PC-3 (cell line): ENCODE measurements at regions of chr2 and their contacts with region 1.

Region 1: DNA sequence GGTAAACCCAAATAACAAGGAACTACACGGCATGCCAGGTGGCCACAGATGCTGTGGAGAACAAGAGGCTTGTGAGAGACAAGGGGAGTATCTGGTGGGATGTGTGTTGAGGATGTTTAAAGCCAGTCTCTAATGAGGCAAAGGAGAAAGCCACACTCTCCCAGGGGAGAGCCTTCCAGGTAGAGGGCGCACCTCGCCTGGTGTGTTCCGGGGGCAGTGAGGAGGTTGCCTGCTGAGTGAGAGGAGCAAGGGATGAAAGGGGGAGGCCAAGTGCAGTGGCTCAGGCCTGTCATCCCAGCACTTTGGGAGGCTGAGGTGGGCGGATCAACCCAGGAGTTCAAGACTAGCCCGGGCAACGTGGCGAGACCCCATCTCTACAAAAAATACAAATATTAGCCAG is 16.2 kb downstream of the SAG start:
- DNase-seq: no peak
- ATAC-seq: no peak
- H3K4me3 ChIP-seq: no peak overlapping the region
- H3K27ac ChIP-seq: no peak overlapping the region
- H3K4me1 ChIP-seq: no peaks in the 10 kb centered on the region
- H3K27me3 ChIP-seq: 0 out of 2 replicates have a peak, but pooled peaks cover 3% of the 10 kb centered on the region
- CTCF ChIP-seq: no peak

Region 2: DNA sequence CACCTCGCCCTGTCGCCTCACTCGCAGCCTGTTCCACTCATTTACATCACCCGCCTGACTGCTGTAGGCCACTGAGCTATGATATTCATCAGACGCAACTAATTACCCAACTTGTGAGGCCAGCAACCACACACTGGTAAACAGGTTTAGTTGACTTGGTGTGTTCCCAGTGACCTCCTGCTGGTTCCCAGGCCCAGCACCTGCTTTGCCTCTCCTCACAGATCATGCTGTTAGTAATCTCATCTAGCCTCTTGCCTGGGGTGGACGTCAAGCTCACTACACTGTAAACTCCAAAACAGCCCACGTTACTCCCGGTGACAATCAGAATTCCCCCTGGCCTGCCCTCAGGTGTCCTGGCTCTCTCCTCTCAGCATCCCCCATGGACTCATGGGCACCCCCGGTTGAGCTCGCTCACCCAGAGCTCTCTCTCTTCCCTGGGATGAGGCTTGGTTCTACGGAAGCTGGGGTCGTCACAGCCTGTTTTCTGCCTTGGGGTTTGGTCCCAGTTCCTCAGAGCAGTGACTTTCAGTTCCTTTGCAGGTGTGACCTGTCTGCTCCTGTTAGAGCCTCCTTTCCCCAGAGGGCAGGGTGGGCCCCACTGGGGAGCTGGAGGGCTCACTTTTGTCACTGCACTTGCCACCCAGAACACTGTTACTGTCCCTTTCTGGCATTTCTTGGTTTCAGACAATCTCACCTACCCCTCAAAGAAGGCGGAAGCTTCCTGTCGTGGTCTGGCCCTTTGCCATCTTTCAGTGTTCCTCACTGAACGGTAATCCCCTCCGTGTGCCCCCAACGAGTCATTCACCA is 223.5 kb before region 1 on chr2:
- CTCF ChIA-PET with region 1: no interaction called
- POLR2A ChIA-PET with region 1: no interaction called
- intact Hi-C with region 1: no loop called
- DNase-seq: no peak
- ATAC-seq: no peak
- H3K4me3 ChIP-seq: no peak overlapping the region
- H3K27ac ChIP-seq: no peak overlapping the region
- H3K4me1 ChIP-seq: no peaks in the 10 kb centered on the region
- H3K27me3 ChIP-seq: no peaks in the 10 kb centered on the region
- CTCF ChIP-seq: no peak

Region 3: GRCh38 chr2:233531888-233532458 is 208.1 kb after region 1 on chr2:
- CTCF ChIA-PET with region 1: no interaction called
- POLR2A ChIA-PET with region 1: no interaction called
- intact Hi-C with region 1: no loop called
- DNase-seq: no peak
- ATAC-seq: no peak
- H3K4me3 ChIP-seq: no peak overlapping the region
- H3K27ac ChIP-seq: no peak overlapping the region
- H3K4me1 ChIP-seq: no peaks in the 10 kb centered on the region
- H3K27me3 ChIP-seq: no peaks in the 10 kb centered on the region
- CTCF ChIP-seq: no peak

Region 4: DNA sequence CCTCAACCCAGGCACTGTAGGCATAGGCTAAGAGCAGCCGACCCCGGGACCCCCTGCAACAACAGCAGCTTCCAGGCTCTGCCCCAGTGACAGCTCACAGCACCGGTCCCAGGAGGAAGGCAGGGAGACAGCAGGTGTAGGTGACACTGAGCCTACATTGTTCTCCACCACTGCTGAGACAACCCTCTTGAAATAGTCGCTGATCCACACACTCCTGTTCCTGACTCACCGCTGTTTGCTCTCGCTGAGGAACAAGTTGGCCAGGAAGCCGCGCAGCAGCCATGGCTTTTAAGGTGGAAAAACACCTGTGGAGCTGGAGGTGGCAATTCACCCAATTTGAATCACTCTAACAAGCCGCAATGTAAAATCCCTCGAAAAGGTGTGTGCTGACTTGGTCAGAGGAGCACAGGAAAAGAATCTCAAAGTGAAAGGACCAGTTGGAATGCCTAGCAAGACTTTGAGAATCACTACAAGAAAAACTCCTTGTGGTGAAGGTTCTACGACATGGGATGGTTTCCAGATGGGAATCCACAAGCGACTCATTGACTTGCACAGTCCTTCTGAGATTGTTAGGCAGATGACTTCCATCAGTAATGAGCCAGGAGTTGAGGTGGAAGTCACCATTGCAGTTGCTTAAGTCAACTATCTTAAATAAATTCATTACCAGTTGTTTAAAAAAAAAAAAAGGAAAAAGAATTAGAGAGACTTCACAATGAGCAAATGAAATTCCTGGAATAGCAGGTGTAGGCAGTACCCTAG is 1005.5 kb after region 1 on chr2:
- CTCF ChIA-PET with region 1: no interaction called
- POLR2A ChIA-PET with region 1: interaction called, 18 read pairs
- intact Hi-C with region 1: no loop called
- DNase-seq: peak; percentile 27
- ATAC-seq: no peak
- H3K4me3 ChIP-seq: no peak overlapping the region
- H3K27ac ChIP-seq: no peak overlapping the region
- H3K4me1 ChIP-seq: no peaks in the 10 kb centered on the region
- H3K27me3 ChIP-seq: no peaks in the 10 kb centered on the region
- CTCF ChIP-seq: no peak

Region 5: GRCh38 chr2:234536178-234536965 is 1212.5 kb after region 1 on chr2:
- CTCF ChIA-PET with region 1: no interaction called
- POLR2A ChIA-PET with region 1: no interaction called
- intact Hi-C with region 1: no loop called
- DNase-seq: no peak
- ATAC-seq: no peak
- H3K4me3 ChIP-seq: no peak overlapping the region
- H3K27ac ChIP-seq: no peak overlapping the region
- H3K4me1 ChIP-seq: no peaks in the 10 kb centered on the region
- H3K27me3 ChIP-seq: no peaks in the 10 kb centered on the region
- CTCF ChIP-seq: no peak